Colonic mucosa (tissue), 4 donors: ENCODE measurements at regions of chr20 and their contacts with region 1.

Region 1: DNA sequence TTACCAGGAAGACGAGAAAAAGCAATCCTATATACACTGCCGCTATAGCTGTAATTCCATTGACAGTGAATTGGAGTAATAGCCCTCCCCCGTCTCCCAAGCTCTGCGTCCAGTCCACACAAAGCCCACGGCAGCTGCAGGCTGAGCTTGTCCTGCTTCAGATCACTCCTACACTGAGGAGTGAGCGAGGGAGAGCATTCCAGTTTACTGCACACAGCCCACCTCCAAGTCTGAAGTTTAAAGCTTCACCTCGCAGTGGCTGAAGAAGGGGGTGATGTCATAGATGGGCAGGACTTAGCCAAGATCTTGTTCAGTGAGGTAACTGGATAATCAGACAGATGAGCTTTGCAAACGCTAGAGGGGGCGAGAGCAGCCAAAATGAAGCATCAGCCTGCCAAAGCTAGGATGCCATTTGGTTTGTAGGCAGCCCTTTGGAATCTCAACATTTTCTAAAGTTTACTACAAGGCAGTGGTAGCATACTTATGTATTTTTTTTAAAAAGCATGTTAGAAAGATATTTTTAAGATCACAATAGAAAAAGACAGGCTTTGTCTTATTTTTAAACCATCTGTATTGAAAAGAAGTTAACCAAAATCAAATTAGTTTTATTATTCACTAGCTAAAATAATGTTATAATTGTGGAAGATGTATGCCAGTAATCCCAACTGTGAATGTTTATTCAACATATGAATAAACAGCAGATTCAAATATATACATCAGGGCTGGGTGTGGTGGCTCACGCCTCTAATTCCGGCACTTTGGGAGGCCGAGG is at the start of gene FLRT3:
- DNase-seq: peak; percentile 81
- H3K4me3 ChIP-seq: peak within 1 kb of the TSS; percentile 29
- H3K27ac ChIP-seq: no peak within 1 kb of the TSS
- H3K4me1 ChIP-seq: no peaks in the 10 kb centered on the region
- H3K27me3 ChIP-seq: no peaks in the 10 kb centered on the region
- CTCF ChIP-seq: peak; percentile 43
- total RNA-seq, gene FLRT3: 0.86 to 4.6 TPM

Region 2: GRCh38 chr20:14189794-14190402 is 147.7 kb before region 1 on chr20:
- intact Hi-C with region 1: no loop called
- DNase-seq: peak; percentile 29
- H3K4me3 ChIP-seq: no peak overlapping the region
- H3K27ac ChIP-seq: no peak overlapping the region
- H3K4me1 ChIP-seq: no peaks in the 10 kb centered on the region
- H3K27me3 ChIP-seq: no peaks in the 10 kb centered on the region
- CTCF ChIP-seq: no peak

Region 3: GRCh38 chr20:14459079-14459478 is 121.5 kb after region 1 on chr20:
- intact Hi-C with region 1: no loop called
- DNase-seq: no peak
- H3K4me3 ChIP-seq: no peak overlapping the region
- H3K27ac ChIP-seq: no peak overlapping the region
- H3K4me1 ChIP-seq: no peaks in the 10 kb centered on the region
- H3K27me3 ChIP-seq: no peaks in the 10 kb centered on the region
- CTCF ChIP-seq: no peak

Region 4: DNA sequence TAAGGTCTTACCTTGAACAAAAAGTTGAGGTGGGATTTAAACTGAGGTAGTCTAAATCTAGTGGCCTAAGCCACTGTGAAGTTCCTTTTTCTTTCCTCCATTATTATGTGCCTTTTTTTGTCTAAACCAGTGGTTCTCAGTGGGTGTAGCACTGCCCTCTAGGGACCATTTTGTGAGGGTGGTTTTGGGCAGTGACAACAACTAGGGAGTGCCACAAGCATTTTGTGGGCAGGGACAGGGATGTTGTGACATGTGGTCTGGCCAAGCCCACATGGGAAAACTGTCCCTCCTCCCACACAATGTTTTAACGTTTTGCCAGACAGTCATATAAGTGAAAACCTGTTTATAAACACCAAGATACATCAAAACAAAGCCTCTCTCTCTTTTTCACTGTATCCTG is 899.2 kb after region 1 on chr20:
- intact Hi-C with region 1: loop called (anchors 5 kb)
- DNase-seq: peak; percentile 32
- H3K4me3 ChIP-seq: no peak overlapping the region
- H3K27ac ChIP-seq: no peak overlapping the region
- H3K4me1 ChIP-seq: no peaks in the 10 kb centered on the region
- H3K27me3 ChIP-seq: no peaks in the 10 kb centered on the region
- CTCF ChIP-seq: peak; percentile 37